ENCODE measurements at regions of chr16 and their contacts with region 1.

Region 1: DNA sequence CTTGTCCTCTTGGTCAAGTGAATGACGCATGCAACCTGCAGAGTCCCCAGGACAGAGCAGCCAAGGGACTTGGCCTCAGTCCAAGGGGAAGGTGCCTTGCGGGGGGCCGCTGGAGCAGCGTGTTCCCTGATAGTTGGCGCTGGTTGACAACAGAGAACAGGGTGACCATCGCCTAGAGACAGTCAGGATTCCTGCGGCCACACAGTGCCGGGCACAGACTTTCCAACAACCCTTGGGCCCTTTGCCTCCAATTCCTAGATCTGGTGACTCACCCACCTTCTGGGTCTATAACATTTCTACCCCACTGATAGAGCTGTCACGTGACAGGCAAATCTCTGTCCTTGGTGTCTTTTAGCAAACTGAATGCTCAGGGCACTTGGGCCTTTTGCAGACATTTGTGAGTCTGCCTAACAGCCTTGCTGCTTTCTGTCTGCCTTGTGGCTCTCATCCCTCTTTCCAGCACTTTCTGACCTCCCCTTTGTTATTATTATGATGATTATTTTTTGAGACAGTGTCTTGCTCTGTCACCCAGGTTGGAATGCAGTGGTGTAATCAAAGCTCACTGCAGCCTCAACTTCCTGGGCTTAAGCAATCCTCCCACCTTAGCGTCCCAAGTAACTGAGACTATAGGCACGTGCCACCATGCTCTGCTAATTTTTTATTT is 11.9 kb upstream of the TEDC2 start:
- DNase-seq: no peak
- H3K4me3 ChIP-seq: no peak overlapping the region
- H3K27ac ChIP-seq: no peak overlapping the region
- H3K4me1 ChIP-seq: no peaks in the 10 kb centered on the region
- H3K27me3 ChIP-seq: no peaks in the 10 kb centered on the region
- CTCF ChIP-seq: no peak
- EP300 ChIP-seq: no peak
- POLR2A ChIP-seq: no peak

Region 2: GRCh38 chr16:1959269-1960049 is 488.6 kb before region 1 on chr16 and contains the start of gene NDUFB10:
- in situ Hi-C with region 1: no loop called
- intact Hi-C with region 1: no loop called
- DNase-seq: peak; percentile 95
- H3K4me3 ChIP-seq: peak within 1 kb of the TSS; percentile 69 to 99 (median 86)
- H3K27ac ChIP-seq: peak within 1 kb of the TSS; percentile 89 to 97 (median 91)
- H3K4me1 ChIP-seq: peaks cover 8 to 39% (median 33%) of the 10 kb centered on the region in 4 donors
- H3K27me3 ChIP-seq: no peaks in the 10 kb centered on the region
- CTCF ChIP-seq: peak; percentile 47 to 75 (median 53)
- EP300 ChIP-seq: no peak
- POLR2A ChIP-seq: peak; percentile 92
- total RNA-seq, gene NDUFB10: 137 to 496 (median 250) TPM

Region 3: GRCh38 chr16:2155091-2156021 is 292.7 kb before region 1 on chr16 and contains the start of gene TRAF7:
- in situ Hi-C with region 1: no loop called
- intact Hi-C with region 1: no loop called
- DNase-seq: peak; percentile 98
- H3K4me3 ChIP-seq: peak within 1 kb of the TSS; percentile 70 to 89 (median 78)
- H3K27ac ChIP-seq: peak within 1 kb of the TSS; percentile 87 to 94 (median 92)
- H3K4me1 ChIP-seq: peaks cover 67 to 86% (median 82%) of the 10 kb centered on the region in 4 donors
- H3K27me3 ChIP-seq: no peaks in the 10 kb centered on the region
- CTCF ChIP-seq: no peak
- EP300 ChIP-seq: no peak
- POLR2A ChIP-seq: peak; percentile 100
- total RNA-seq, gene TRAF7: 43.4 to 80.4 (median 63.0) TPM

Region 4: GRCh38 chr16:2465653-2466415 is 17.8 kb after region 1 on chr16:
- in situ Hi-C with region 1: no loop called
- intact Hi-C with region 1: loop called (anchors 1 kb)
- DNase-seq: no peak
- H3K4me3 ChIP-seq: no peak overlapping the region
- H3K27ac ChIP-seq: no peak overlapping the region
- H3K4me1 ChIP-seq: peaks cover 4 to 28% (median 19%) of the 10 kb centered on the region in 4 donors
- H3K27me3 ChIP-seq: peaks cover 38% of the 10 kb centered on the region
- CTCF ChIP-seq: no peak
- EP300 ChIP-seq: no peak
- POLR2A ChIP-seq: no peak

Region 5: DNA sequence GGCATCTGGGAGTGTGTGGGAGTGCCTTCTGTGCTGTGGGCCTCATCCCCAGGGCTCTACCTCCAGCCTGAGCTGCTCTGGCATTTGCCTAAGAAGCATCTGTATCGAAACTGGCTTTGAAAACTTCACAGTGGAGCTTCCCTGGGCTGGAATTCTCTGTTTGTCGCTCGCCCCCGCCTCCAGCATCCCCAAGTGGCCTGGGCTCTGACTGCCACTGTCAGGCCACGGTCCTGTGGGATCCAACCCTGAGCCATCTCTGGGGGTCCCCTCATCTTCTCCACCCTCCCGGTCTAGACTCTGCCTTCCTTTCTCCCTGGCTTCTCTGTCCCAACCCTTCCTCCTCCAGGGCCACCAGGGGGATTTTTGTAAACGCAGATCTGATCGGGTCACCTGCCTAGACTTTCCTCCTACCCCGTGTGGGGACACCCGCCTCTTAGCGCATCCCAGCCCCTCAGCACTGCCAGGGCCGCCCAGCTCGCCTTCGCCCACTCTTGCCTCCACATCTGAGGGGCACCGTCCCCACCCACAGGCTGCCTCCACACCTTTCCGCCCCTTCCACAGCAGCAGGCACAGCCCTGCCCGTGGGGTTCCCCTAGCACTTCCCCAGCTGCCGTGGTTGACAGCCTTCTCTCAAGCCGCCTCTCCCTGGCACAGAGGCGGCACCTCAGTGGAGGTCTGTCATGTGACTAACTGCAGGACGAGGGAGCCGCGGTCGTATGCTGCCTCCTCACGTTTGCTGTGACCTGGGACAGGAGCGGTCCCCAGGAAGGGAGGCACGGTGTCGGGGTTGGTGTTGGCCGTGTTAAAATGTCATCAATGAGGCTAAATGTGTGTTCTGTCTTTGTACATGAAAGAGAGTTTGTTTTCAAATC is 38.8 kb after region 1 on chr16:
- in situ Hi-C with region 1: no loop called
- intact Hi-C with region 1: no loop called
- DNase-seq: peak; percentile 75
- H3K4me3 ChIP-seq: no peak overlapping the region
- H3K27ac ChIP-seq: no peak overlapping the region
- H3K4me1 ChIP-seq: peaks cover 8 to 30% (median 10%) of the 10 kb centered on the region in 4 donors
- H3K27me3 ChIP-seq: no peaks in the 10 kb centered on the region
- CTCF ChIP-seq: peak in 4 of 5 experiments; percentile 21 to 61 (median 32)
- EP300 ChIP-seq: no peak
- POLR2A ChIP-seq: no peak

Measured in transverse colon (tissue), 4 donors.